Activated naive CD4-positive, alpha-beta T cell treated with anti-CD3 and anti-CD28 coated beads, Interleukin-2, amount 10 ng/mL, durations not matched to agents 7 days and 5 days (primary cell): ENCODE measurements at regions of chr1 and their contacts with region 1.

Region 1: GRCh38 chr1:40951943-40952743 is 27.4 kb upstream of the CTPS1 start:
- DNase-seq: peak; percentile 77
- H3K4me3 Mint-ChIP-seq: no peak overlapping the region
- H3K27ac Mint-ChIP-seq: no peak overlapping the region
- H3K4me1 Mint-ChIP-seq: peaks cover 22% of the 10 kb centered on the region
- H3K27me3 Mint-ChIP-seq: peaks cover 64% of the 10 kb centered on the region

Region 2: DNA sequence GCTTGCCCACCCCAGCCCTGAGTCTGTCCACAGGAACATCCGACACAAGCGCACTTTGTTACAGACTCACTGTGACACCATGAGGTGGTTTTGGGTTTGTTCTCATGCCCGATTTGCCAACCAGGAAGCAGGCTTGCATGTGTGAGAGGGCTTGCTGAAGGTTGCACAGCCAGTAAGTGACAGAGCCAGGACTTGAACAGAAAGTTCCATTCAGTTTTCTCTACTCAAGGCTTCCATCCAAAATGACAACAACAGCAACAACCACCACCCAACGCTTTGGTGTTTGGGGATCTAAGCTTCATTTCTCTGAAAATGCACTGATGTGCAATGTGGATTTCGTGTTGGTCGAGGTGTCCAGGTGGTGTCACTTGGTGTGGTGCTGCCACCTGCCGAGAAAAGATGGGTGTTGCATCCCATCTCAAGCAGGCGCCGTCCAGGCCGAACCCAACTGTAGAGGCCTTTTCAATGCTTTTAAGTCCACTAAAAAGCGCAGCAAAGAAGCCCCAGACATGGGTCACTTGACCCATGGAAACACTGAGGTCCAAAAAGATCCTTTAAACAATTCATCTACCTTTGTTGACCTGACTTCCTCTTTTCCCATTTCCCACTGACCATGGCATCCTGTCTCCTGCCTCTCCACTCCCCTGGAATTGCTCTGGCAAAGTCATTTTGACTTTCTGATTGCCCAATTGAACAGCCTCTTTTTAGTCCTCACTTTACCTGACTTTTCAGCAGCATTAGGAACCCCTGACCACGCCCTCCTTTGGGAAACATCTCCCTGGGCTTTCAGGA is 102.1 kb before region 1 on chr1:
- CTCF ChIA-PET with region 1: interaction called, 159 read pairs
- DNase-seq: peak; percentile 85
- H3K4me3 Mint-ChIP-seq: peak overlapping the region; percentile 4
- H3K27ac Mint-ChIP-seq: peak overlapping the region; percentile 29
- H3K4me1 Mint-ChIP-seq: peaks cover 30% of the 10 kb centered on the region
- H3K27me3 Mint-ChIP-seq: peaks cover 17% of the 10 kb centered on the region

Region 3: DNA sequence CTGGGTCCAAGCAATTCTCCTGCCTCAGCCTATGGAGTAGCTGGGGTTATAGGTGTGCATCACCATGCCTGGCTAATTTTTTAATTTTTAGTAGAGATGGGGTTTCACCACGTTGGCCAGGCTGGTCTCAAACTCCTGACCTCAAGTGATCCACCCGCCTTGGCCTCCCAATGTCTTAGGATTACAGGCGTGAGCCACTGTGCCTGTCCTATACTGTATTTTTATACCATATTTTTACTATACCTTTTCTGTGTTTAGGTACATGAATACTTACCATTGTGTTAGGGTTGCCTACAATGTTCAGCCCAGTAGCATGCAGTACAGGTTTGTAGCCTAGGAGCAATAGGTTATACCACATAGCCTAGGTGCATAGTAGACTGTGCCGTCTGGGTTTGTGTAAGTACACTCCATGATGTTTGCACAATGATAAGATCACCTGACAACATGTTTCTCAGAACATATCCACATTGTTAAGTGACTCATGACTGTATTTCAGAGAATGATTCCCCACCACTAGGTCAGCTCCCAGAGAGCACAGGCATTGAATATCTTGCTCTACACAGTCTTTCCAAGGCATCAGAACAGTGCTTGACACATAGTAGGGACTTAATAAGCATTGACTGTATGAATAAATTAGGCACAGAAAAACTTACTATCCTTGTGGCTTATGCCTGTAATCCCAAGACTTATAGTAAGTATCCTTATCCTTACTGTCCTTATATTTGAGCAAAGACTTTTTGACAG is 83.9 kb before region 1 on chr1:
- CTCF ChIA-PET with region 1: interaction called, 159 read pairs
- DNase-seq: no peak
- H3K4me3 Mint-ChIP-seq: no peak overlapping the region
- H3K27ac Mint-ChIP-seq: peak overlapping the region; percentile 61
- H3K4me1 Mint-ChIP-seq: peaks cover 40% of the 10 kb centered on the region
- H3K27me3 Mint-ChIP-seq: peaks cover 4% of the 10 kb centered on the region

Region 4: DNA sequence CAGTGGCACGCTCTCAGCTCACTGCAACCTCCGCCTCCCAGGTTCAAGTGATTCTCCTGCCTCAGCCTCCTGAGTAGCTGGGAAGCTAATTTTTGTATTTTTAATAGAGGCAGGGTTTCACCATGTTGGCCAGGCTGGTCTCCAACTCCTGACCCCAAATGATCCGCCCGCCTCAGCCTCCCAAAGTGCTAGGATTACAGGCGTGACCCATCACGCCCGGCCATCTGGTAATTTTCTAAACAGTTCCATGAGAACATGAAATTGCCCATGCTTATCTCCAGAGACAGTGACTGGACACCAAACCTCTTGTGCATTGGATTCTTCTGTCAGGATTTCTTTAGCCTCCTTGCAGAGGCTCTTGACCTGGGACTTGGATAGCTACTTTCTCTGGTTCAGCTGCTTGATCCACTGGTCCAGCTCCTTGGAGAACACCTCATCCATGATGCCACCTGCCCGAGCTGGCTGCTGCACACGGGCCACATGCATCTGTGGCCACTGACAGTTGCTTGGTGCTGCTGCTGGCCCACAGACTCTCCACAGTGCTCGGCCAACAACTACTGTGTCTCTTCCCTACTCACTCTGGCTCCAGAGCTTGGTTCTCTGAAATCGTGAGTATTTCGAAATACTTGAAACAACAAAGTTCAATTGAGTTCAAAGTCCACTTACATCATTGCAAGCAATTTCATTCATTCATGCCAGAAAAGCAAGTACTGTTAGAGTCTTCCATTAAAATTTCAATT is 12.7 kb before region 1 on chr1:
- CTCF ChIA-PET with region 1: interaction called, 23 read pairs
- DNase-seq: no peak
- H3K4me3 Mint-ChIP-seq: no peak overlapping the region
- H3K27ac Mint-ChIP-seq: no peak overlapping the region
- H3K4me1 Mint-ChIP-seq: no peaks in the 10 kb centered on the region
- H3K27me3 Mint-ChIP-seq: peaks cover 22% of the 10 kb centered on the region

Region 5: GRCh38 chr1:41078616-41079015 is 126.5 kb after region 1 on chr1:
- CTCF ChIA-PET with region 1: no interaction called
- DNase-seq: no peak
- H3K4me3 Mint-ChIP-seq: no peak overlapping the region
- H3K27ac Mint-ChIP-seq: no peak overlapping the region
- H3K4me1 Mint-ChIP-seq: no peaks in the 10 kb centered on the region
- H3K27me3 Mint-ChIP-seq: no peaks in the 10 kb centered on the region

Region 6: DNA sequence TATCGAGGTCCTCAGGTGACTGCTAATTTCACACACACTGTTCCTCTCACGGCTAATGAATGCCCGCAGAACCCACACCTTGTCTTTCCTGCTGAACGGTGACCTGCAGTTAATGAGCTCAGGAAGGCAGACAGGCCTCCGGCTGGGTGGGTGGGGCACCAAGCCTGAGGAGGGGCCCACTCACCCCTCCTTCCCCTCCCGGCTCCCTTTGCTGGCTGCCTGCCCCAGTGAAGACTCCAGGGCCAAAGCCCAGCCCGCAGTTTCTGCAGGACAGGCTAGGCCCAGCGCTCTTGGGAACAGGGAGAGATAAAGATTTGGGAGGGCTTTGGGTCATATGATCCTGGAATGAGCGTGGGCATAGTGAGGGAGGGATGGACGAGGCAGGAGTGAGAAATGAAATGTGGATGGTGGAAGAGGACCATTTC is 435.5 kb after region 1 on chr1:
- CTCF ChIA-PET with region 1: no interaction called
- DNase-seq: no peak
- H3K4me3 Mint-ChIP-seq: no peak overlapping the region
- H3K27ac Mint-ChIP-seq: no peak overlapping the region
- H3K4me1 Mint-ChIP-seq: peaks cover 7% of the 10 kb centered on the region
- H3K27me3 Mint-ChIP-seq: peaks cover 62% of the 10 kb centered on the region